Gastrocnemius medialis (tissue), 4 donors: ENCODE measurements at regions of chr19 and their contacts with region 1.

Region 1: GRCh38 chr19:33778089-33778791 is 18.4 kb upstream of the KCTD15 start:
- DNase-seq: peak; percentile 46 to 50
- ATAC-seq: peak; percentile 77 to 83
- H3K4me3 ChIP-seq: peak overlapping the region in 1 of 4 donors; percentile 27
- H3K27ac ChIP-seq: no peak overlapping the region
- H3K4me1 ChIP-seq: peaks cover 3% of the 10 kb centered on the region in 2 donors
- H3K27me3 ChIP-seq: peaks cover 4 to 17% (median 16%) of the 10 kb centered on the region in 3 donors
- CTCF ChIP-seq: peak; percentile 94 to 99 (median 99)
- POLR2A ChIP-seq: no peak

Region 2: DNA sequence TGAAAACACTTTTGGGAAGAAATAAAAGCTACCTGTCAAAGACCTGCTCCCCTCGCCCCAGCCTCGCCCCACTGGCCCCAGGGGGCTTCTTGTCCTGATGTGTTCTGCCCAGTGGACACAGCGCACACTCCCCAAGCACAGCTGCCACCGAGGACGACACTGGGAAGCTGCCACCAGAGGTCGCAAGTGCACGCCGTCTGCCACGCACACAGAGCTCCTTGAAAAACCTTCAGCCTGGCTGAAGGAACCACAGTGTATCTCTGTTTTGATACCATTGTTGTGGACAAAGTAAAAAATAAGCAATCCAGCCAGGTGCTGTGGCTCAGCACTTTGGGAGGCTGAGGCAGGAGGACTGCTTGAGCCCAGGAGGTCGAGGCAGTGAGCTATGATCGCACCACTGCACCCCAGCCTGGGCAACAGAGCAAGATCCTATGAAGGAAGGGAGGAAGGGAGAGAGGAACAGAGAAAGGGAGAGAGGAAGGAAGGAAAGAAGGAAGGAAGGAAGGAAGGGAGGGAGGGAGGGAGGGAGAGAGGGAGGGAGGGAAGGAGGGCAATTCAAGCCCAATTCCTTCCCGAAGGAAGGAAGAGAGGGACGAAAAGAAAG is 347.5 kb before region 1 on chr19:
- in situ Hi-C with region 1: loop called in 3 of 4 experiments (anchors 10 to 25 kb)
- intact Hi-C with region 1: no loop called
- DNase-seq: no peak
- ATAC-seq: peak in 1 of 2 donors; percentile 51
- H3K4me3 ChIP-seq: no peak overlapping the region
- H3K27ac ChIP-seq: no peak overlapping the region
- H3K4me1 ChIP-seq: no peaks in the 10 kb centered on the region
- H3K27me3 ChIP-seq: no peaks in the 10 kb centered on the region
- CTCF ChIP-seq: peak; percentile 38 to 76 (median 60)
- POLR2A ChIP-seq: no peak

Region 3: GRCh38 chr19:33998739-33999345 is 220.6 kb after region 1 on chr19:
- in situ Hi-C with region 1: loop called in 1 of 4 experiments (anchors 25 kb)
- intact Hi-C with region 1: loop called (anchors 1 kb)
- DNase-seq: no peak
- ATAC-seq: no peak
- H3K4me3 ChIP-seq: no peak overlapping the region
- H3K27ac ChIP-seq: no peak overlapping the region
- H3K4me1 ChIP-seq: no peaks in the 10 kb centered on the region
- H3K27me3 ChIP-seq: peaks cover 0 to 4% (median 0%) of the 10 kb centered on the region in 3 donors
- CTCF ChIP-seq: peak in 3 of 5 experiments; percentile 16 to 34 (median 26)
- POLR2A ChIP-seq: no peak

Region 4: GRCh38 chr19:34096020-34096915 is 318.0 kb after region 1 on chr19:
- in situ Hi-C with region 1: loop called (anchors 10 to 25 kb)
- intact Hi-C with region 1: loop called (anchors 1 kb)
- DNase-seq: no peak
- ATAC-seq: no peak
- H3K4me3 ChIP-seq: peak overlapping the region in 1 of 4 donors; percentile 14
- H3K27ac ChIP-seq: no peak overlapping the region
- H3K4me1 ChIP-seq: no peaks in the 10 kb centered on the region
- H3K27me3 ChIP-seq: no peaks in the 10 kb centered on the region
- CTCF ChIP-seq: peak in 4 of 5 experiments; percentile 23 to 58 (median 46)
- POLR2A ChIP-seq: no peak

Region 5: DNA sequence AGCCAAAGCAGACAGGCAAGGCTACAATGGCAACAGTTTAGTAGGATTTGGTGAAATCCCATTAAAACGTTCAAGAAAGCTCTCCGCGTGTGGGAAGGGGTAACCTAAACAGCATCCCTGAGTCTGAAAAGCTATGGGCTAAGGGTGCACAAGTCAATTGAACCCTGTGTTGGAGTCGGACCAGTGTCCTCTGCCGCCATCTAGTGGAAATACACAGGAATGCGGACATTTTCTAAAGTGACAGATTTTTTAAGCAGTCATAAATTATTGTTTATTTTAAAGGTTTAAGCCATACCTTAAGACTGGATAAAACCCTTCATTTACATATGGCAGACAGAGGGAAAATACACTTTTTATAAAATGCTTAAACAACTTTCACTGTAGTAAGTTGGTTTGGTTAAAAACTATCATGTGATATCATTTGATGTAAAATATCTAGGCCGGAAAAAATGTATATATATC is 367.5 kb after region 1 on chr19:
- in situ Hi-C with region 1: no loop called
- intact Hi-C with region 1: loop called (anchors 1 kb)
- DNase-seq: no peak
- ATAC-seq: peak in 1 of 2 donors; percentile 39
- H3K4me3 ChIP-seq: no peak overlapping the region
- H3K27ac ChIP-seq: no peak overlapping the region
- H3K4me1 ChIP-seq: no peaks in the 10 kb centered on the region
- H3K27me3 ChIP-seq: no peaks in the 10 kb centered on the region
- CTCF ChIP-seq: peak; percentile 66 to 81 (median 76)
- POLR2A ChIP-seq: no peak